ENCODE measurements at regions of chr9 and their contacts with region 1.

Region 1: GRCh38 chr9:89000973-89001916 is 10.0 kb downstream of the S1PR3 start:
- DNase-seq: peak; percentile 95
- H3K4me3 ChIP-seq: no peak overlapping the region
- H3K27ac ChIP-seq: no peak overlapping the region
- H3K4me1 ChIP-seq: peaks cover 23% of the 10 kb centered on the region
- H3K27me3 ChIP-seq: no peaks in the 10 kb centered on the region
- CTCF ChIP-seq: peak; percentile 93

Region 2: DNA sequence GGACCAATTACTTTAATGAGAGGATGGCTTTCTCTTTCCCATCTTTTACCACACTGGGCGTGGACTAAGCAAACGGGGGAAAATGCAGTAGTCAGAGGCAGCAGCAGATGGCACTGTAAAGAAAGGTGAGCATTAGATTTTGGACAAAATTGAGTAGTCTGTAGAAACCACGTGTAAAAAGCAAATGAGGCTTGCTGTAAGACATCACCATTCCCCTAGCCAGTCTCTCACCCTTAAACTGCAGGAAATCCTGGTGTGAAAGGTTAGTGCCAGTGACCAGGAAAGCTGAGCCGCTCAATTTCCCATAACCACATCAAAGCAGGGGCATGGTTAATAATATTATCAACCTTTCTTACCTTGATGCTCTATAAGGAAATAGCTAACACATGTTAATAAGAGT is 894.8 kb before region 1 on chr9:
- CTCF ChIA-PET with region 1: no interaction called
- POLR2A ChIA-PET with region 1: no interaction called
- intact Hi-C with region 1: loop called (anchors 10 kb)
- DNase-seq: peak; percentile 74
- H3K4me3 ChIP-seq: no peak overlapping the region
- H3K27ac ChIP-seq: no peak overlapping the region
- H3K4me1 ChIP-seq: no peaks in the 10 kb centered on the region
- H3K27me3 ChIP-seq: no peaks in the 10 kb centered on the region
- CTCF ChIP-seq: peak; percentile 72

Region 3: GRCh38 chr9:88593537-88594185 is 407.6 kb before region 1 on chr9:
- CTCF ChIA-PET with region 1: interaction called, 3 read pairs
- POLR2A ChIA-PET with region 1: no interaction called
- intact Hi-C with region 1: loop called (anchors 1 kb)
- DNase-seq: peak; percentile 85
- H3K4me3 ChIP-seq: no peak overlapping the region
- H3K27ac ChIP-seq: no peak overlapping the region
- H3K4me1 ChIP-seq: peaks cover 6% of the 10 kb centered on the region
- H3K27me3 ChIP-seq: no peaks in the 10 kb centered on the region
- CTCF ChIP-seq: peak; percentile 74

Region 4: GRCh38 chr9:88722753-88723152 is 278.5 kb before region 1 on chr9:
- CTCF ChIA-PET with region 1: no interaction called
- POLR2A ChIA-PET with region 1: no interaction called
- intact Hi-C with region 1: loop called (anchors 1 kb)
- DNase-seq: peak; percentile 72
- H3K4me3 ChIP-seq: no peak overlapping the region
- H3K27ac ChIP-seq: no peak overlapping the region
- H3K4me1 ChIP-seq: peaks cover 4% of the 10 kb centered on the region
- H3K27me3 ChIP-seq: no peaks in the 10 kb centered on the region
- CTCF ChIP-seq: peak; percentile 73